Left colon (tissue), 2 donors: ENCODE measurements at regions of chr1 and their contacts with region 1.

Region 1: GRCh38 chr1:171644805-171645483 is 7.5 kb downstream of the MYOC start:
- DNase-seq: peak; percentile 69 to 78
- ATAC-seq: peak; percentile 93

Region 2: DNA sequence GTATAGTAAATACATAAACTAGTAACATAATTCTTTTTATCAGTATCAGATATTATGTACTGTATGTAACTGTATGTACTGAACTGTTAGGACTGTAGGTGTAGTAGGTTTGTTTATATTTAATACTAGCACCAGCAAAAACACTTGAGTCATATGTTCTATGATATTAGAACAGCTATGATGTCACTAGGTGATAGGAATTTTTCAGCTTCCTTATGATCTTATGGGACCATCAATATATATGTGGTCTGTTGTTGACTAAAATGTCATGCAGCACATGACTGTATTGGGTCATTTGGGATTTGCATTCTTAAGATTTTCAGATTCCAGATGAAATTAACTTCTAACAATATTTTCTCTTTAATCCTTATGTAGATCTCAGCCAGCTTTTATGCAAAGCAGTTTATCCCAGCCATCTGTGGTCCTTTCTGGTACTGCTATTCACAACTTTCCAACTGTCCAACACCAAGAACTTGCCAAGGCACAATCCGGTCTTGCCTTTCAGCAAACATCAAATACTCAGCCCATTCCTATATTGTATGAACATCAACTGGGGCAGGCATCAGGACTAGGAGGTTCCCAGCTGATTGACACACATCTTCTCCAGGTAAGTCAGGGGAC is 61.3 kb before region 1 on chr1:
- intact Hi-C with region 1: no loop called
- DNase-seq: no peak
- ATAC-seq: no peak

Region 3: DNA sequence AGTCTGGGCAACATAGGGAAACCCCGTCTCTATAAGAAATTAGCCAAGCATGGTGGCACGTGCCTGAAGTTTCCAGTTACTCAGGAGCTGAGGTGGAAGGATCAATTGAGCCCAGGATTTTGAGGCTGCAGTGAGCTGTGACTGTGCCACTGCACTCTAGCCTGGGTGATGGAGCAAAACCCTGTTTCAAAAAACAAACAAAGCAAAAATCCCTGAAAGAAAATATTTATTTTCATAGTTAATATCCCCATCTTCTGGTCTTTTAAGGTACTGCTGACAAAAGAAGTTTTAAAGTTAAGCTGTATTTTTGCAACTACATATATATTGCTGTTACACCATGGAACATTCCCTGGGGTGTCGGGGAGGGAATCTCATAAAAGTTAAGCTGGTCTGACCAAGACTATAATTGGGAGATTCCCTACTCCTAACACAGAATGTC is 70.9 kb after region 1 on chr1:
- intact Hi-C with region 1: loop called in 1 of 2 experiments (anchors 2 kb)
- DNase-seq: no peak
- ATAC-seq: no peak